ENCODE measurements at regions of chr21 and their contacts with region 1.

Region 1: GRCh38 chr21:33915368-33916199 is at the start of gene ATP5PO:
- DNase-seq: peak; percentile 97 to 98
- ATAC-seq: peak; percentile 95 to 97
- H3K4me3 ChIP-seq: peak within 1 kb of the TSS; percentile 86 to 96 (median 90)
- H3K27ac ChIP-seq: peak within 1 kb of the TSS; percentile 88 to 93 (median 92)
- H3K4me1 ChIP-seq: peaks cover 17 to 26% of the 10 kb centered on the region in 2 donors
- H3K27me3 ChIP-seq: no peaks in the 10 kb centered on the region
- CTCF ChIP-seq: peak in 1 of 5 experiments; percentile 10
- POLR2A ChIP-seq: peak; percentile 82 to 86
- total RNA-seq, gene ATP5PO: 261 to 560 (median 356) TPM

Region 2: DNA sequence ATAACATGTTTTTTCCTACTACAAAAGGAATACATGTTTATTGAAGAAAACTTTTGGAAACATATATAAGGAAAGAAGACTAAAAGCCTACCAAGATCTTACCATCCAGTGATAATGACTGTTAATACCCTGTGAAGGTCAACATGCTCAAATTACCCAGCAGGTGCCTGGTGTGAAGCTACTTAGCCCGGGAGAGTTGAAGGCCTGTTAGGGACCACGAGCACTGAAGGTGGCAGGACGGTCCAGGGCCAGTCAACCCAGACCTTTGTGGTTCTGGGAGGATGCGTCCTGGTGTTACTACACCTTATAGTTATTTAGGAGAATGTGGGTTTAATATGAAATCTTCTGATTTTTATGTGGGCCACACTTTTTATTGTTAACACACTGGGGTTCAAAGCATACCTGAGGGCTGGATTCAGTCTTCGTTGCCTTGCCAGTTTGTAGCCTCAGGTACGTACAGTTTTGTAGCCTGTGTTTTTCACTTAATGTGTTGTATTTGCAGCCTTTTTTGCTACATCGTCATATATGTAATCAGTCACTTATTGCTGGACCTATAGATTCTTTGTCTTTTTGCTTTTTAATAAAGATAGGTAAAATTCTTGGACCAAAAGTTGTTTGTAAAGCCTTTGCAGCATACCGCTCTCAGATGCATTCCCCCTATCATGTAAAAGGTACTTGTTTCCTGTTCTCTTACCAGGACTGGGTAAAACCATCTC is 263.5 kb before region 1 on chr21:
- in situ Hi-C with region 1: no loop called
- intact Hi-C with region 1: no loop called
- DNase-seq: no peak
- ATAC-seq: peak in 1 of 2 donors; percentile 74
- H3K4me3 ChIP-seq: no peak overlapping the region
- H3K27ac ChIP-seq: no peak overlapping the region
- H3K4me1 ChIP-seq: peaks cover 19 to 27% of the 10 kb centered on the region in 2 donors
- H3K27me3 ChIP-seq: no peaks in the 10 kb centered on the region
- CTCF ChIP-seq: no peak
- POLR2A ChIP-seq: no peak

Region 3: GRCh38 chr21:34180407-34180806 is 264.8 kb after region 1 on chr21:
- in situ Hi-C with region 1: no loop called
- intact Hi-C with region 1: no loop called
- DNase-seq: no peak
- ATAC-seq: peak in 1 of 2 donors; percentile 37
- H3K4me3 ChIP-seq: peak overlapping the region; percentile 39 to 48 (median 46)
- H3K27ac ChIP-seq: peak overlapping the region; percentile 60 to 87 (median 74)
- H3K4me1 ChIP-seq: peaks cover 7 to 51% of the 10 kb centered on the region in 2 donors
- H3K27me3 ChIP-seq: no peaks in the 10 kb centered on the region
- CTCF ChIP-seq: no peak
- POLR2A ChIP-seq: no peak

Region 4: GRCh38 chr21:34336756-34337391 is 421.3 kb after region 1 on chr21:
- in situ Hi-C with region 1: no loop called
- intact Hi-C with region 1: loop called (anchors 10 kb)
- DNase-seq: no peak
- ATAC-seq: no peak
- H3K4me3 ChIP-seq: no peak overlapping the region
- H3K27ac ChIP-seq: no peak overlapping the region
- H3K4me1 ChIP-seq: peaks cover 0 to 10% of the 10 kb centered on the region in 2 donors
- H3K27me3 ChIP-seq: no peaks in the 10 kb centered on the region
- CTCF ChIP-seq: no peak
- POLR2A ChIP-seq: no peak

Region 5: DNA sequence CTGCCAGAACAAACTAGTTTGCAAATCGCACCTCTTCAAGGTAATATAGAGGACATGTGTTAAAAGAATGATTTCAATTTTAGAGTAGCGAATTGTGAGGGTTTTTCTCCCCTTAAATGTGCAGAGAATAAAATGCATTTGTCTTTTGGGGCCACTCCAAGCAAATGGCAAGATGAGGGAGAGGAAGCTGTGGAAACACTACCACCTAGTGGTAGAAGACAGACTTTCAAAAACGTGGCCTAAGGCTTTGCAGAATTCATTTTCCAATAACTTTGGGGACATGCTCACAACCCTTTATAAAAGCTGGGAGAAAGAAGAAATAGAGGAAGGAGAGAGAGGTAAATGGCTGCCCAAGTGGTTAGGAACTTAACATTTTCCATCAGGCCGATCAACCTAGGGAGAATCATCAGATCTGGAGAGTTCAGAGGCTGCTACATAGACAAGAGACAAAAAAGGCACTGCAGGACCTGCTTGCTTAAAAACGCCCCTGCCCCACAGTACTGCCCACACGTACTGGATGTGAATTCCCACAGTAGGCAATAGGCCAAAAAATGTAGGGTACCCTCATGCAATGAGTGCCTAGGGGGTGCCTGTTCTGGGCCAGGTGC is 715.1 kb after region 1 on chr21:
- in situ Hi-C with region 1: loop called in 1 of 4 experiments (anchors 25 kb)
- intact Hi-C with region 1: no loop called
- DNase-seq: no peak
- ATAC-seq: peak; percentile 83 to 86
- H3K4me3 ChIP-seq: no peak overlapping the region
- H3K27ac ChIP-seq: no peak overlapping the region
- H3K4me1 ChIP-seq: no peaks in the 10 kb centered on the region
- H3K27me3 ChIP-seq: peaks cover 0 to 4% (median 0%) of the 10 kb centered on the region in 3 donors
- CTCF ChIP-seq: peak; percentile 74 to 87 (median 77)
- POLR2A ChIP-seq: no peak

Measured in gastrocnemius medialis (tissue), 4 donors.